Activated CD8-positive, alpha-beta memory T cell treated with anti-CD3 and anti-CD28 coated beads, Interleukin-2, amount 10 ng/mL, durations not matched to agents 7 days and 5 days (primary cell): ENCODE measurements at regions of chr16 and their contacts with region 1.

Region 1: GRCh38 chr16:21656795-21657768 is 4.7 kb upstream of the IGSF6 start:
- DNase-seq: peak; percentile 56
- ATAC-seq: peak; percentile 53
- H3K4me3 Mint-ChIP-seq: no peak overlapping the region
- H3K27ac Mint-ChIP-seq: peak overlapping the region; percentile 63
- H3K4me1 Mint-ChIP-seq: peaks cover 37% of the 10 kb centered on the region
- H3K27me3 Mint-ChIP-seq: no peaks in the 10 kb centered on the region

Region 2: GRCh38 chr16:21584817-21585216 is 72.3 kb before region 1 on chr16:
- CTCF ChIA-PET with region 1: interaction called, 12 read pairs
- DNase-seq: no peak
- ATAC-seq: no peak
- H3K4me3 Mint-ChIP-seq: no peak overlapping the region
- H3K27ac Mint-ChIP-seq: no peak overlapping the region
- H3K4me1 Mint-ChIP-seq: peaks cover 3% of the 10 kb centered on the region
- H3K27me3 Mint-ChIP-seq: peaks cover 3% of the 10 kb centered on the region

Region 3: GRCh38 chr16:21638573-21638975 is 18.5 kb before region 1 on chr16:
- CTCF ChIA-PET with region 1: interaction called, 46 read pairs
- DNase-seq: peak; percentile 51
- ATAC-seq: peak; percentile 67
- H3K4me3 Mint-ChIP-seq: no peak overlapping the region
- H3K27ac Mint-ChIP-seq: peak overlapping the region; percentile 79
- H3K4me1 Mint-ChIP-seq: peaks cover 27% of the 10 kb centered on the region
- H3K27me3 Mint-ChIP-seq: no peaks in the 10 kb centered on the region

Region 4: GRCh38 chr16:21646721-21647561 is 10.1 kb before region 1 on chr16:
- CTCF ChIA-PET with region 1: interaction called, 46 read pairs
- DNase-seq: peak; percentile 95
- ATAC-seq: peak; percentile 90
- H3K4me3 Mint-ChIP-seq: peak overlapping the region; percentile 40
- H3K27ac Mint-ChIP-seq: peak overlapping the region; percentile 91
- H3K4me1 Mint-ChIP-seq: peaks cover 55% of the 10 kb centered on the region
- H3K27me3 Mint-ChIP-seq: no peaks in the 10 kb centered on the region

Region 5: DNA sequence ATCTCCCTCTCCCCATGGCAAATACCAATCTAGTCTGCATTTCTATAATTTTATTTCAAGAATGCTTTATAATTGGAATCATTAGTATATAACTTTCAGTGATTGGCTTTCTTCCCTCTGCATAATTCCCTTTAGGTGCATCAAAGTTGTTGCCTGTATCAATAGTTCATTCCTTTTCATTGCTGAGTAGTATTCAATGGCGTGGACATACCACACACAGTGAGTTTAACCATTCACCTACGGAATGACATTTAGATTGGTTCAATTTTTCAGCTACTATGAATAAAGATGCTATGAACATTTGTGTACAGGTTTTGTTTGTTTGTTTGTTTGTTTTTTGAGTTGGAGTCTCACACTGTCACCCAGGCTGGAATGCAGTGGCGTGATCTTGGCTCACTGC is 16.4 kb after region 1 on chr16:
- CTCF ChIA-PET with region 1: interaction called, 12 read pairs
- DNase-seq: no peak
- ATAC-seq: no peak
- H3K4me3 Mint-ChIP-seq: no peak overlapping the region
- H3K27ac Mint-ChIP-seq: no peak overlapping the region
- H3K4me1 Mint-ChIP-seq: no peaks in the 10 kb centered on the region
- H3K27me3 Mint-ChIP-seq: peaks cover 18% of the 10 kb centered on the region

Region 6: GRCh38 chr16:21708533-21709115 is 51.5 kb after region 1 on chr16:
- CTCF ChIA-PET with region 1: interaction called, 76 read pairs
- DNase-seq: peak; percentile 91
- ATAC-seq: peak; percentile 83
- H3K4me3 Mint-ChIP-seq: no peak overlapping the region
- H3K27ac Mint-ChIP-seq: no peak overlapping the region
- H3K4me1 Mint-ChIP-seq: peaks cover 9% of the 10 kb centered on the region
- H3K27me3 Mint-ChIP-seq: no peaks in the 10 kb centered on the region

Region 7: DNA sequence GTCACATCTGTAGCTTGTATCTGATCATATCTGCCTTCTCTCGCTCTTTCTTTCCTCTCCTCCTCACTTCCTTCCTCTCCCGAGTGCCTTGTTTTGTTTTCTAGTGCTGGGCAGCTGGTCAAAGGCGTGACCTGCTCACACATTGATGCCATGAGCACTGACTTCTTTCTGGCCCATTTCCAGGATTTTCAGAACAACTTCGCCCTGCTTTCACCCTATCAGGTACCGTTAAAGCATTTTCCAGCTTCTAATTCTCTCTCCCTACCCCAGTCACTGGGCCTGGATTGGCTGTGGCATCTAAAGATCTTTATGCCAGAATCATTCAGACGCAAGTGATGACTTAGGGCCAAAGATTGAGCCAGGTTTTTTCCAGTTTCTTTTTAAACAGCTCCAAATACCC is 62.2 kb after region 1 on chr16:
- CTCF ChIA-PET with region 1: interaction called, 10 read pairs
- DNase-seq: no peak
- ATAC-seq: no peak
- H3K4me3 Mint-ChIP-seq: no peak overlapping the region
- H3K27ac Mint-ChIP-seq: no peak overlapping the region
- H3K4me1 Mint-ChIP-seq: peaks cover 5% of the 10 kb centered on the region
- H3K27me3 Mint-ChIP-seq: no peaks in the 10 kb centered on the region